ENCODE measurements at regions of chr10 and their contacts with region 1.

Region 1: GRCh38 chr10:77970869-77971803 is 44.6 kb upstream of the DLG5 start:
- DNase-seq: peak; percentile 29 to 31
- H3K4me3 ChIP-seq: no peak overlapping the region
- H3K4me1 ChIP-seq: peaks cover 7% of the 10 kb centered on the region; the same call in 1 of the 2 replicates
- H3K27me3 ChIP-seq: no peaks in the 10 kb centered on the region

Region 2: GRCh38 chr10:77297393-77297739 is 673.8 kb before region 1 on chr10:
- in situ Hi-C with region 1: no loop called
- DNase-seq: no peak
- H3K4me3 ChIP-seq: no peak overlapping the region
- H3K4me1 ChIP-seq: no peaks in the 10 kb centered on the region
- H3K27me3 ChIP-seq: no peaks in the 10 kb centered on the region

Region 3: GRCh38 chr10:77857254-77857653 is 113.9 kb before region 1 on chr10:
- in situ Hi-C with region 1: loop called (anchors 10 kb)
- DNase-seq: no peak
- H3K4me3 ChIP-seq: no peak overlapping the region
- H3K4me1 ChIP-seq: no peaks in the 10 kb centered on the region
- H3K27me3 ChIP-seq: no peaks in the 10 kb centered on the region